ENCODE measurements at regions of chr9 and their contacts with region 1.

Region 1: DNA sequence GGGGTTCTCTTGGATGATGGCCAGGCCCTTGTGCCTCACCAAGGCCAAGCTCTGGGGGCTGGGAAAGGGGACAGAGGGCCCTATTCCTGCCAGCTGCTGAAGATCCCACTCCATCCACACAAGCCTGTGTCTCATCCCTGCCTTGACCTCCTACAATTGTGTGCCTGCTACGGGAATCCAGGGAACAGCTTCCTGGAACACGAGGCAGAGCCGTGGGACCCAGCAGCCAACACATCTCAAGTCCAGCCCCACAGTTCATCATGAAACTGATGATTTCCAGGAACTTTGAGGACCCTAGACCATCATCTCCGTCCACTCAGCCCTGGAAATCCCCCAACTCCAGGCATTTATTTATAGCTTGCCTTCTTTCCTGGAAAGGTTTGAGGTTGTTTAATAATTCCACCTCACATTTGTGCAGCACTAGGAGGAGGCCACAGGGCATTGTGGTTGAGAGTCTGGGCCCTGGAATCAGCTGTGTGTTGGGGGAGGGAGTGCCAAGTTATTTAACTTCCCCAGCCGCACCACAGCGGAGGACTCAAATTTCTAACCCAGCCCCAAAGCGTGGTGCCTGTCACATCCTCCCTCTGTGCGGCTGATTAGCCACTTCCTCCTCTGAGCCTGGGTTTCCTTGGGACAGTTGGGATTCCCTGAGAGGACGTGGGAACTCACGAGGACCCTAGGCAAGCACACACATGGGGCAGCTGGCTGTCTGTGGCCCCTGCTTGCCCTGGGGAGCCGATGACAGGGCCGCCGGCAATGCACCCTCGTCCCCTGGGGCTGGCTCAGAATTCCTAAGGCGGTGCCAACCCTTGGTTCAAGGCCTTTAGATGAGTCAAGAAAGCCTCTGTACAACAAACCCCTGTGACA is 58.2 kb upstream of the GGTA1 start:
- DNase-seq: no peak
- H3K4me3 ChIP-seq: no peak overlapping the region
- H3K27ac ChIP-seq: peak overlapping the region; percentile 36
- H3K4me1 ChIP-seq: peaks cover 29% of the 10 kb centered on the region
- H3K27me3 ChIP-seq: no peaks in the 10 kb centered on the region
- CTCF ChIP-seq: no peak
- POLR2A ChIP-seq: no peak

Region 2: GRCh38 chr9:121242219-121242958 is 315.4 kb before region 1 on chr9:
- intact Hi-C with region 1: no loop called
- DNase-seq: no peak
- H3K4me3 ChIP-seq: no peak overlapping the region
- H3K27ac ChIP-seq: peak overlapping the region; percentile 51
- H3K4me1 ChIP-seq: peaks cover 5% of the 10 kb centered on the region
- H3K27me3 ChIP-seq: no peaks in the 10 kb centered on the region
- CTCF ChIP-seq: no peak
- POLR2A ChIP-seq: no peak

Region 3: GRCh38 chr9:121604242-121604641 is 46.4 kb after region 1 on chr9:
- intact Hi-C with region 1: loop called (anchors 5 kb)
- DNase-seq: no peak
- H3K4me3 ChIP-seq: no peak overlapping the region
- H3K27ac ChIP-seq: no peak overlapping the region
- H3K4me1 ChIP-seq: peaks cover 60% of the 10 kb centered on the region
- H3K27me3 ChIP-seq: no peaks in the 10 kb centered on the region
- CTCF ChIP-seq: no peak
- POLR2A ChIP-seq: no peak